Activated CD8-positive, alpha-beta memory T cell treated with anti-CD3 and anti-CD28 coated beads, Interleukin-2, amount 10 ng/mL, durations not matched to agents 7 days and 5 days (primary cell): ENCODE measurements at regions of chr17 and their contacts with region 1.

Region 1: GRCh38 chr17:27805520-27806146 is 5.3 kb upstream of the NOS2 start:
- DNase-seq: peak; percentile 92
- ATAC-seq: peak; percentile 61
- H3K4me3 Mint-ChIP-seq: peak overlapping the region; percentile 50
- H3K27ac Mint-ChIP-seq: peak overlapping the region; percentile 91
- H3K4me1 Mint-ChIP-seq: peaks cover 46% of the 10 kb centered on the region
- H3K27me3 Mint-ChIP-seq: no peaks in the 10 kb centered on the region

Region 2: GRCh38 chr17:27622986-27623385 is 182.6 kb before region 1 on chr17:
- CTCF ChIA-PET with region 1: no interaction called
- DNase-seq: no peak
- ATAC-seq: no peak
- H3K4me3 Mint-ChIP-seq: no peak overlapping the region
- H3K27ac Mint-ChIP-seq: no peak overlapping the region
- H3K4me1 Mint-ChIP-seq: peaks cover 24% of the 10 kb centered on the region
- H3K27me3 Mint-ChIP-seq: no peaks in the 10 kb centered on the region

Region 3: GRCh38 chr17:27793168-27793905 is 12.3 kb before region 1 on chr17:
- CTCF ChIA-PET with region 1: interaction called, 16 read pairs
- DNase-seq: no peak
- ATAC-seq: peak; percentile 61
- H3K4me3 Mint-ChIP-seq: peak overlapping the region; percentile 33
- H3K27ac Mint-ChIP-seq: no peak overlapping the region
- H3K4me1 Mint-ChIP-seq: peaks cover 4% of the 10 kb centered on the region
- H3K27me3 Mint-ChIP-seq: peaks cover 43% of the 10 kb centered on the region

Region 4: GRCh38 chr17:27846042-27846655 is 40.5 kb after region 1 on chr17:
- CTCF ChIA-PET with region 1: interaction called, 16 read pairs
- DNase-seq: peak; percentile 73
- ATAC-seq: peak; percentile 73
- H3K4me3 Mint-ChIP-seq: peak overlapping the region; percentile 71
- H3K27ac Mint-ChIP-seq: peak overlapping the region; percentile 83
- H3K4me1 Mint-ChIP-seq: peaks cover 30% of the 10 kb centered on the region
- H3K27me3 Mint-ChIP-seq: no peaks in the 10 kb centered on the region

Region 5: GRCh38 chr17:27879987-27880608 is 74.5 kb after region 1 on chr17:
- CTCF ChIA-PET with region 1: interaction called, 571 read pairs
- DNase-seq: peak; percentile 85
- ATAC-seq: peak; percentile 90
- H3K4me3 Mint-ChIP-seq: no peak overlapping the region
- H3K27ac Mint-ChIP-seq: no peak overlapping the region
- H3K4me1 Mint-ChIP-seq: peaks cover 27% of the 10 kb centered on the region
- H3K27me3 Mint-ChIP-seq: peaks cover 6% of the 10 kb centered on the region

Region 6: DNA sequence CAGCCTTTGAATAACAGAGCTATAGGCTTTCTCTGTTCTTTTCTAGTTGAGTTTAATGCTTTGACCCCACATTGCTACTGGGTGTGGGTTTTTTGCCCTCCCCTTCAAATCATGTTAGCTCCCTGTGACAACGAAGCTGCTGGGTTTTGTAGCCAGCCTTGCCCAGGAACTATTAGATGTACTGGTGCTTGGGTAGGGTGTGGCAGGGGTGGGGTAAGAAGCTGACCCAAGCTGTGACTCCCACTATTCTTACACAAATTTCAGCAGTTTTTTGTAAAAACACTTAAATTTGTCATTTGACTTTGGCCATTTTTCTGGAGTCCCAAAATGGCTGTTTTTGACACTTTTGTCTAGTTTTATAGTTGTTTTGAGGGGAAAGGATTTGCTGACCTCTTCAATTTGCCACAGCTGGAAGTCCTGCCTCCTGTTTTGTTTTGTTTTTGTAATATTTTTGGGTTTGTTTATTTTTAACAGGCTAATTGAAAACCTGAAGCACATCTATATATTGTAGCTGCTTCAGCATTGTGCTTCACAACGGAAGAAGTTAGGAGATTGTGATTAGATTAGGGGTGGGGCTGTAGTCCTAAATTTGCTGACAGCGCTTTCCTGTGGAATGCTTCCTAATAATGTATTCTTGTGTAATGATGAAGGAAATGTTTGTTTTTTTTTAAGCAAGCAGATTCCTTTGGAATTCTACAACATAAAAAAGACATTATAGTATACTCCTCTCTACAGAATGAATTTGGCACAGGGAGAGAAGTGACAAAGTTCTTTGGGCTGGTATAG is 306.8 kb after region 1 on chr17:
- CTCF ChIA-PET with region 1: no interaction called
- DNase-seq: no peak
- ATAC-seq: no peak
- H3K4me3 Mint-ChIP-seq: no peak overlapping the region
- H3K27ac Mint-ChIP-seq: no peak overlapping the region
- H3K4me1 Mint-ChIP-seq: peaks cover 7% of the 10 kb centered on the region
- H3K27me3 Mint-ChIP-seq: no peaks in the 10 kb centered on the region

Region 7: DNA sequence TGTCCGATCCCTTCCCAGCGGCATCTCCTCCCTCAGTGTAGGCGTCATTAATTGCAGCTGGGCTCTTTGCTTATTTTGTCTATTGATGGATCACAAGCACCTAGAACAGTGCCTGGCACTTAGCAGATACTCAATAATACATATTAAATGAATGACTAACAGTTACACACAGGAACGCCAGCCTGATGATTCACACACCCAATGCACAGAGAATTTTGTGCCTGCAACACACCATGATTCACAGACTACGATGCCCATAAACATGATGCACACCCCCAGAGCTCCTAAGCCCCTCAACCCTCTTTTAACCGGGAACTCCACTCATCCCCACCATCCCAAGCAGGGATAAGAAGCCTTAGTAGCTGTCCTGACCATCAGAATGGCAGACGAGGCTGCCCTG is 446.8 kb after region 1 on chr17:
- CTCF ChIA-PET with region 1: interaction called, 26 read pairs
- DNase-seq: no peak
- ATAC-seq: no peak
- H3K4me3 Mint-ChIP-seq: no peak overlapping the region
- H3K27ac Mint-ChIP-seq: no peak overlapping the region
- H3K4me1 Mint-ChIP-seq: peaks cover 7% of the 10 kb centered on the region
- H3K27me3 Mint-ChIP-seq: peaks cover 16% of the 10 kb centered on the region